CD4-positive, alpha-beta memory T cell (primary cell): ENCODE measurements at regions of chr19 and their contacts with region 1.

Region 1: GRCh38 chr19:11380653-11381534 is 3.2 kb downstream of the EPOR start:
- DNase-seq: peak; percentile 99
- H3K4me3 ChIP-seq: peak overlapping the region; percentile 59 to 61
- H3K4me3 Mint-ChIP-seq: peak overlapping the region; percentile 91 to 99 (median 98)
- H3K27ac ChIP-seq: peak overlapping the region; percentile 90
- H3K27ac Mint-ChIP-seq: peak overlapping the region; percentile 91 to 100 (median 99)
- H3K4me1 ChIP-seq: peaks cover 53% of the 10 kb centered on the region
- H3K4me1 Mint-ChIP-seq: peaks cover 25 to 41% (median 32%) of the 10 kb centered on the region in 4 donors
- H3K27me3 ChIP-seq: no peaks in the 10 kb centered on the region
- H3K27me3 Mint-ChIP-seq: peaks cover 9 to 11% of the 10 kb centered on the region in 2 donors

Region 2: DNA sequence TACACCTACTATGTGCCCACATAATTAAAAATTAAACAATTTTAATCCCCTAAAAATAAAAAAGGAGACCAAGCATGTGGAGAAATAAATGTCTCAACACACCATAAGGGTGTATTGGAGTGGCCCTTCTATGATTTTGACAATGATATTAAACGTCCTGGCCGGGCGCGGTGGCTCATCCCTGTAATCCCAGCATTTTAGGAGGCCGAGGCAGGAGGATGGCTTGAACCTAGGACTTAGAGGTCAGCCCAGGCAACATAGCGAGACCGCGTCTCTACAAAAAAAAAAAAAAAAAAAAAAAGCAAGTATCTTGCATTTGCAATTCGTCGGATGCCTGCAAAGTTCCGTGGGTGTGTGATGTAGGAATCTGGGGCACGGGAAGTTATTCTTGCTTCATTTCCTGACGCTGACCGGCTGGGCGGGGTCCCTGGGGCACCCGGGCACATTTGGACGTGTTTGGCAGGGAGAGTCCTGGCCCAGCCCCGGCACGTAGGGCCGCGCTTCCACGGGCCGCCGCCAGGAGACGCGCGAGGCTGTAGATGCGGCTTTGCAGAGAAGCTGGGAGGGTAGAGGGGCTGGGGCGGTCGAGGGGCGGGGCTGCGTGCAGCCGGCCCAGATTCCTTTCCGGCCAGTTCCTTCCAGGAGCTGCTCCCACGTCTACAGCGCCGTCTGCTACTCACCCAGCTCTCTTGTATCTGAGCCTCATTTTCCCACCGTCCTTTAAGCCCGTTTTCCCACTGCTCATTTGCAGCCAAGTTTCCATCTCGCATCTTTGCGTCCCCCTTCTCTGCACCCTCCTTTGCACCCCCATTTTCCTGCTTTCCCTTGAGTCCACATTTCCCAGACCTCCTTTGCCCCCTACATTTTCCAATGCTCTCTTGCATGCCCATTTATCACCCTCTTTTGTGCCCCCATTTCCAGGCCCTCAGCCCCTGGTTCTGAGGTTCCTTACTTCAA is 87.2 kb before region 1 on chr19:
- CTCF ChIA-PET with region 1: interaction called, 4 read pairs
- POLR2A ChIA-PET with region 1: no interaction called
- intact Hi-C with region 1: loop called (anchors 1 kb)
- DNase-seq: peak; percentile 64 to 75 (median 71)
- H3K4me3 ChIP-seq: no peak overlapping the region
- H3K4me3 Mint-ChIP-seq: peak overlapping the region in 3 of 8 donors; percentile 20 to 71 (median 48)
- H3K27ac ChIP-seq: no peak overlapping the region
- H3K27ac Mint-ChIP-seq: peak overlapping the region in 2 of 7 donors; percentile 41 to 46
- H3K4me1 ChIP-seq: peaks cover 8% of the 10 kb centered on the region
- H3K4me1 Mint-ChIP-seq: peaks cover 4 to 8% (median 7%) of the 10 kb centered on the region in 4 donors
- H3K27me3 ChIP-seq: no peaks in the 10 kb centered on the region
- H3K27me3 Mint-ChIP-seq: peaks cover 12 to 16% of the 10 kb centered on the region in 2 donors

Region 3: DNA sequence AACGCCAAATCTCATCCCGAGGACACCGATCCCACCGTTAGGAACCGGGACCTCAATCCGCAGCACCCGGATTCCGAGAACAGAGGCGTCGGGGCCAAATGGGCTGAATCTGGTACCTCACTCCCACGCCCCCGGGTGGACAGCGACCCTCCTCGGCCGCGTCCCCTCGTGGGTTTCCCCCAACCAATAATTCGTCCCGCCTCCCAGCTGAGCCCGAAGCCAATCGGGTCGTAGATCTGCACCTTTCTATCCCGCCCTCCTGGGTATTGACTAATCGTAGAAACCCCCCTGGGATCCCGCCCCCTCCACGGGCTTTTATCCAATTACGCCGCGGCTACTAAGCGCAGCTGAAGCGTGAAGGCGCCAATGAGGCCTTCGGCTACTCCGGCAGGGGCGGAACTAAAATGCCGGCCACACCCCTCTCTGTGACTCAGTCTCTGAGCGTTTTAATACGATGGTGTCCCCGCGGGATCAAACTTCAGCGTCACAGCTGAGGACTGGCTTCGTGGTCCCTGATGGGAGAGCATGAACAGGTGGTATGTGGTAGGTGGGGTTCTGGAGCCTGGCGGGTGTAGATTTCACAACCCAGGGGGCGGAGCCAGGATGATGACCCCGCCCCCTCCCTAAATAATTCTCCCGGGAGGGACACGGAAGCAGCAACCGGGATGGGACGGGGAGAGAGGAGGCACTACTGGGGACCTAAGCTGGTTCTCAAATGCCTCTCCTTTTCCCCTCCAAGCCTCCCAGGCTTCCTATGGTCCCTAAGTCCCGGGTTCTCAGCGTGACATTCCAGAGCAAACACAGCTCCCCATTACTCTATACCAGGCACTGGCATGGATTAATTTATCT is 34.6 kb before region 1 on chr19 and contains the starts of genes CCDC159 and TMEM205:
- CTCF ChIA-PET with region 1: interaction called, 12 read pairs
- POLR2A ChIA-PET with region 1: interaction called, 54 read pairs
- intact Hi-C with region 1: loop called (anchors 1 kb)
- DNase-seq: peak; percentile 97 to 100 (median 99)
- H3K4me3 ChIP-seq: peak within 1 kb of the TSS; percentile 92 to 96
- H3K4me3 Mint-ChIP-seq: peak within 1 kb of the TSS; percentile 95 to 98 (median 97)
- H3K27ac ChIP-seq: peak within 1 kb of the TSS; percentile 88
- H3K27ac Mint-ChIP-seq: peak within 1 kb of the TSS; percentile 80 to 98 (median 95)
- H3K4me1 ChIP-seq: peaks cover 17% of the 10 kb centered on the region
- H3K4me1 Mint-ChIP-seq: peaks cover 17 to 32% (median 25%) of the 10 kb centered on the region in 4 donors
- H3K27me3 ChIP-seq: no peaks in the 10 kb centered on the region
- H3K27me3 Mint-ChIP-seq: no peaks in the 10 kb centered on the region
- total RNA-seq, gene CCDC159: 90.7 to 91.8 TPM
- total RNA-seq, gene TMEM205: 26.1 to 28.5 TPM

Region 4: GRCh38 chr19:11405846-11406643 is 25.2 kb after region 1 on chr19:
- CTCF ChIA-PET with region 1: interaction called, 20 read pairs
- POLR2A ChIA-PET with region 1: no interaction called
- intact Hi-C with region 1: no loop called
- DNase-seq: no peak
- H3K4me3 ChIP-seq: no peak overlapping the region
- H3K4me3 Mint-ChIP-seq: no peak overlapping the region
- H3K27ac ChIP-seq: no peak overlapping the region
- H3K27ac Mint-ChIP-seq: no peak overlapping the region
- H3K4me1 ChIP-seq: no peaks in the 10 kb centered on the region
- H3K4me1 Mint-ChIP-seq: no peaks in the 10 kb centered on the region
- H3K27me3 ChIP-seq: no peaks in the 10 kb centered on the region
- H3K27me3 Mint-ChIP-seq: peaks cover 13 to 15% of the 10 kb centered on the region in 2 donors

Region 5: DNA sequence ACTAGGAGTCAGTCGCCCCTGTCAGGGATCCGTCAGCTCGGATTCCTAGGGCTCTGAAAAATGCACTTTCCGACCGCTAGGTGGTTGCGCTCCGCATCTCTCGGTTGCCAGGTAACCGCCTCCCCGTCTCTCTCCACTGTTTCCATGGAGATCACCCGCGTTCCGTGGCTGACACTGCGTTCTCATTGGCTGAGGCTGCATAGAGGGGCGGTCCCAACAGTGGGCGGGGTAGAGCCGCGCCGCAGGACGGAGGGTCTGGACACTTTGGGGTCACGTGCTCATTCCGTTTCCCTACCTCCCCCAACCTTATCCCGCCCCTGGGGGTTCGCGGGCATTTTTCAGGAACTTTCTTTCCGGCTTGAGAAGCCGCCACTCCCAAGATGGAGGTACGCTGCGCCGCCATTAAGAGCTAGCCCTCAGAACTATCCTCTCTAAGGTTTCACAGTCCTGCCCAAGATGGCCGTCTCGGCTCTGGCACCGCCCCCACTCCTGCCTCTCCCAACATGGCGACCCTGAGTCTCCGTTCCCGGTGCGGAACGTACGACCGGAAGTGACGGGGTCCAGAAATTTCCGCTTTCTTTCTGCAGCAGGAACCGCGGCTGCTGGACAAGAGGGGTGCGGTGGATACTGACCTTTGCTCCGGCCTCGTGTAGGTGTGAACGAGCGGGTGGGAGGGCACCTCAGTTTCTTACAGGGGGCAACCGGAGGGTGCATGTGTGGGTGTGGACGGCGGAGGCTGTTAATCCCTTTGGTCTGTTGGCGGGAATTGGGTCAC is 54.4 kb after region 1 on chr19 and contains the starts of genes ODAD3 and PRKCSH:
- CTCF ChIA-PET with region 1: interaction called, 22 read pairs
- POLR2A ChIA-PET with region 1: interaction called, 32 read pairs
- intact Hi-C with region 1: loop called (anchors 1 kb)
- DNase-seq: peak; percentile 99
- H3K4me3 ChIP-seq: peak within 1 kb of the TSS; percentile 95 to 97
- H3K4me3 Mint-ChIP-seq: peak within 1 kb of the TSS; percentile 97 to 100 (median 99)
- H3K27ac ChIP-seq: peak within 1 kb of the TSS; percentile 74
- H3K27ac Mint-ChIP-seq: peak within 1 kb of the TSS; percentile 95 to 100 (median 98)
- H3K4me1 ChIP-seq: peaks cover 19% of the 10 kb centered on the region
- H3K4me1 Mint-ChIP-seq: peaks cover 14 to 31% (median 23%) of the 10 kb centered on the region in 4 donors
- H3K27me3 ChIP-seq: no peaks in the 10 kb centered on the region
- H3K27me3 Mint-ChIP-seq: peaks cover 2 to 3% of the 10 kb centered on the region in 2 donors
- total RNA-seq, gene ODAD3: not detected
- total RNA-seq, gene PRKCSH: 300 TPM

Region 6: DNA sequence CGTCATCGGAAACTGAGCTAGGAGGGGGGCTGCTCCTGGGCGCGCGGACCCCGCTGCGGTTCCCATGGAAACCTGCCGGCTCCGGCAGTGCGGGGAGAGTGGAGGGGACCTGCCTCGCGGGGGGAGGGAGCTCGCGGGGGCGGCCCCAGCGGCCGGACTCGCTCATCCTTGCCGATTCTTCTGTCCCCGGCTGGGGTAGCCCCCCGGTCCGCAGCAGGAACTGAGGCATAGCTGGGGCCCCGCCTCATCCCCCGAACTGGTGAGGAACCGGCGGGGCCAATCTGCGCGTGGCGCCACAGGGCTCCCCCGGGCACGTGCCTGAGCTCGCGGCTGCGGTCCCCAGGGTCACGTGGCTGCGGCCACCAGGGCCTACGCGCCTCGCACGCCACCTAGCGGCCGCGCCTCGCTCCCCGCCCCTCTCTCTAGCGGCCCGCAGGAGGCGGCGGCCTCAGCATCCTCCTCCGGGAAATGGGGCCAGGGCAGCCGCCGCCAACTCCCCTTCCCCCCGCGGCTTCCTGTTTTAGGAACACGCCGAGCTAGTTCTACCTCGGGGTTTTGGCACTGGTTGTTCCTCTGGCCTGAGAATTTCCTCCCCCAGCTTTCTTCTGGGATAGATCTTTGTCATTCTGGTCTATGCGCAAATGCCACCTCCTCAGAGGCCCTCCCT is 101.6 kb after region 1 on chr19:
- CTCF ChIA-PET with region 1: interaction called, 49 read pairs
- POLR2A ChIA-PET with region 1: interaction called, 19 read pairs
- intact Hi-C with region 1: loop called (anchors 1 kb)
- DNase-seq: peak; percentile 79 to 88 (median 85)
- H3K4me3 ChIP-seq: peak overlapping the region in 1 of 2 donors; percentile 35
- H3K4me3 Mint-ChIP-seq: peak overlapping the region; percentile 58 to 75 (median 70)
- H3K27ac ChIP-seq: no peak overlapping the region
- H3K27ac Mint-ChIP-seq: peak overlapping the region in 6 of 7 donors; percentile 8 to 89 (median 74)
- H3K4me1 ChIP-seq: peaks cover 24% of the 10 kb centered on the region
- H3K4me1 Mint-ChIP-seq: peaks cover 8 to 37% (median 20%) of the 10 kb centered on the region in 4 donors
- H3K27me3 ChIP-seq: peaks cover 12% of the 10 kb centered on the region
- H3K27me3 Mint-ChIP-seq: peaks cover 18 to 23% of the 10 kb centered on the region in 2 donors